Left ventricle myocardium inferior (tissue), 1 donor: ENCODE measurements at regions of chr2 and their contacts with region 1.

Region 1: GRCh38 chr2:28958689-28959088 is 22.4 kb upstream of the TOGARAM2 start:
- DNase-seq: peak; percentile 58
- H3K4me3 ChIP-seq: peak overlapping the region; percentile 15
- H3K27ac ChIP-seq: peak overlapping the region; percentile 48
- H3K4me1 ChIP-seq: peaks cover 33% of the 10 kb centered on the region
- H3K27me3 ChIP-seq: peaks cover 9% of the 10 kb centered on the region
- CTCF ChIP-seq: peak; percentile 71

Region 2: DNA sequence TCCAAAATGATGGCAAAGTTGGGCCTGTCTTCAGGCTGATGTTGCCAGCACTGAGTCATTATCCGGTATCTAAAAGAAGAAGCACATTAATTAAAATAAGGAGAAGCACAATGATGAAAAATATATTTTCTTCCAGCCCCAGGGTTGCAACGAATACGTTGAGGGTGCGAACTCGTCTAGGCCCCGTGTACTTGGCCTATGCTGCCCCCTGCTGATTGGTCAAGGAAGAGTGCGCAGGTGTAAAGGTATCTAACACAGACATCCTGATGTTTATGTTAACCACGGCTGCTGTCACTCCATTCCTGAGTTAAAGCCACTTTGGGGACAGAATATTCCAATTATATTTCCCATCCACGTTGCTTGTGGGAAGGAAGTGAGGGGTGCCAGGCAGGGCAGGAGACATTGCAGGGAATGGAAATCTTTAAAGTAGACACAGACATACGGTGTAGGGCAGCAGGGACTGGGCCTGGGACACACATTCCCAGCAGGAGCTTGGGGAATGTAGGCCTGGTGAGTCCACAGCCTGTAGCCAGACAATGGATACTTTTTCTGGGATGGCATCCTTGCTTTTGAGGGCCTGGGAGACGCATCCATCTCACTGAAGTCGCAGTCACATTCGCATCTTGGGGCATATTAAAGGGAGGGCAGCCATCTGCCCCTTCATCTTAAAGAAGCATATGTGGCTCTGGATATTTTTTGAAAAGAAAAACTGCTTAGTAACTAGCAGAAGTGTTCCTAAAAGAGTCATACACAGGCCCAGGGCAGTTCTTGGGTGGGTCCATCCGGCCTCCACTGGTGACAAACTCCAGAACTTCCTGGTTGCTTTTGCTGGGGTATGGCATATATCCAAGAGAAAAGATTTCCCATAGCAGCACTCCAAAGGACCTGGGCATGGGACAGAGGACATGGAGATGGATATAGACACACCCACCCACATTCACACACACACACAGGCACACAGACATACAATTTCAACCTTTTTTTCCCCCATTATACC is 238.4 kb after region 1 on chr2:
- intact Hi-C with region 1: loop called (anchors 2 kb)
- DNase-seq: peak; percentile 53
- H3K4me3 ChIP-seq: no peak overlapping the region
- H3K27ac ChIP-seq: peak overlapping the region; percentile 34
- H3K4me1 ChIP-seq: peaks cover 9% of the 10 kb centered on the region
- H3K27me3 ChIP-seq: no peaks in the 10 kb centered on the region
- CTCF ChIP-seq: peak; percentile 82

Region 3: DNA sequence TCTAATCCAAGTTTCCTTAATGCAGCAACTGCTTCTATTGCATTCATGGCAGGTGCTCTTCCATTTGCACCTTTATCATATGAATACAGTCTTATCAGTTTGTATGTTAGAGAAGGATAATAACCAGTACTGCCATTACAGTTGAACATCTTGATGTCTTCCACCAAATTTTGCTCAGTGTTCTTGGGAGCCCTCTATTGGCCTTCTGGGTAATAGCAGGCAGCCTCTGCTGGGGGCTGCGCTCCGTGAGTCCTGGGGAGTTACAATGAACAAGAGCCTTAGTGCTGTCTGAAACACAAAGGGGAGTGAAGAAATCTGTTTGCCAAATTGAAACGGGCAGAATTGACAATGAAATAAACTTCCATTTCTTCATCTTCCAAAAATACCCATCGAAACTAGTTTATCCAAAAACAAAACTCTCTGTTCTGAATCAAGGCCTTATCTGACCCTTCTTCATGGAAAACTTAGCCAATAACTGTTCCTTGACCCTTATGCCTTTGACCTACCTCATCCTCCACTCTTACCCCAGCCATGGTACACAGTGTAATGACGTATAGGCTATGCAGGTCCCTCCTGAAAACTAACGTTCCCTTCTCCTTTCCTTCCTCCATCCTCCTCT is 882.8 kb after region 1 on chr2:
- intact Hi-C with region 1: loop called (anchors 5 kb)
- DNase-seq: no peak
- H3K4me3 ChIP-seq: no peak overlapping the region
- H3K27ac ChIP-seq: no peak overlapping the region
- H3K4me1 ChIP-seq: no peaks in the 10 kb centered on the region
- H3K27me3 ChIP-seq: peaks cover 62% of the 10 kb centered on the region
- CTCF ChIP-seq: peak; percentile 90